Ascending aorta (tissue), 2 donors: ENCODE measurements at regions of chr12 and their contacts with region 1.

Region 1: GRCh38 chr12:109573029-109573913 is at the starts of genes MMAB and MVK:
- DNase-seq: peak; percentile 99 to 100
- H3K4me3 ChIP-seq: peak within 1 kb of the TSS; percentile 68 to 78
- H3K27ac ChIP-seq: peak within 1 kb of the TSS; percentile 64 to 78
- H3K4me1 ChIP-seq: peaks cover 0 to 12% of the 10 kb centered on the region in 2 donors
- H3K27me3 ChIP-seq: no peaks in the 10 kb centered on the region
- CTCF ChIP-seq: no peak
- total RNA-seq, gene MMAB: 43.5 TPM
- total RNA-seq, gene MVK: 53.1 TPM

Region 2: GRCh38 chr12:109713187-109713984 is 140.1 kb after region 1 on chr12 and contains the start of gene FAM222A:
- intact Hi-C with region 1: loop called (anchors 1 kb)
- DNase-seq: peak; percentile 85 to 98
- H3K4me3 ChIP-seq: peak within 1 kb of the TSS; percentile 65 to 94
- H3K27ac ChIP-seq: no peak within 1 kb of the TSS
- H3K4me1 ChIP-seq: peaks cover 0 to 6% of the 10 kb centered on the region in 2 donors
- H3K27me3 ChIP-seq: peaks cover 24% of the 10 kb centered on the region
- CTCF ChIP-seq: peak in 1 of 3 experiments; percentile 18
- total RNA-seq, gene FAM222A: 3.3 TPM

Region 3: GRCh38 chr12:110217996-110218674 is 644.9 kb after region 1 on chr12:
- intact Hi-C with region 1: loop called (anchors 10 kb)
- DNase-seq: no peak
- H3K4me3 ChIP-seq: no peak overlapping the region
- H3K27ac ChIP-seq: no peak overlapping the region
- H3K4me1 ChIP-seq: peaks cover 3 to 17% of the 10 kb centered on the region in 2 donors
- H3K27me3 ChIP-seq: no peaks in the 10 kb centered on the region
- CTCF ChIP-seq: no peak

Region 4: DNA sequence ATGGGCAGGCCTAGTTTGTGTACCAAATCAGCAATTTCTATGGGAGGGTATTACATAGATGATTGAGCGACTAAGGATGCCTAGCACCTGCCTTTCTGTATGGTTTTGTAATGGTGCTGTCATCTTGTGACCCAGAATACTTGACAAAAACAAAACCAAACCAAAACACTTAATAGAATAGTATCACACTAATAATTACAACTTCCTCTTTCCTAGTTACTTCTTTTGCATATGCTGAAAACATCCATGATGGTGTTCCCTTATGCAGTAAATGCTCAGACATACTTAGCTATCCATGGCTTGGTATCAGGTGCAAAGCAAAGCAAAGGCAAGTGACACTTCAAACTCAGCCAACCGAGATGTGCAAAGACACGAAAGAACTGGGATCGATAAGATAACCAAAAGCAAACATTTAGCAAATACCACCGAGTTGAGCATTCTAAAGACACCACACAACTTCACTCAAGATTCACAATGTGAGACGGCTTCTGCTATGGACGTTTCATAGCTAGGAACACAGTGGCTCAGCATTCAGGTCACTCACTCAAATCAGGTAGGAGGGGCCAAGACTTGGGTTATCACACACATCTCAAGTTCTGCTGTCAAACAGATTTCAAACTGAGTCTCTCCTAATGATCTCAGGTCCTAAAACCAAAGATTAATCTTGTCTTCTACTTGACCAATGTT is 1145.1 kb after region 1 on chr12:
- intact Hi-C with region 1: no loop called
- DNase-seq: no peak
- H3K4me3 ChIP-seq: no peak overlapping the region
- H3K27ac ChIP-seq: no peak overlapping the region
- H3K4me1 ChIP-seq: no peaks in the 10 kb centered on the region
- H3K27me3 ChIP-seq: no peaks in the 10 kb centered on the region
- CTCF ChIP-seq: no peak

Region 5: DNA sequence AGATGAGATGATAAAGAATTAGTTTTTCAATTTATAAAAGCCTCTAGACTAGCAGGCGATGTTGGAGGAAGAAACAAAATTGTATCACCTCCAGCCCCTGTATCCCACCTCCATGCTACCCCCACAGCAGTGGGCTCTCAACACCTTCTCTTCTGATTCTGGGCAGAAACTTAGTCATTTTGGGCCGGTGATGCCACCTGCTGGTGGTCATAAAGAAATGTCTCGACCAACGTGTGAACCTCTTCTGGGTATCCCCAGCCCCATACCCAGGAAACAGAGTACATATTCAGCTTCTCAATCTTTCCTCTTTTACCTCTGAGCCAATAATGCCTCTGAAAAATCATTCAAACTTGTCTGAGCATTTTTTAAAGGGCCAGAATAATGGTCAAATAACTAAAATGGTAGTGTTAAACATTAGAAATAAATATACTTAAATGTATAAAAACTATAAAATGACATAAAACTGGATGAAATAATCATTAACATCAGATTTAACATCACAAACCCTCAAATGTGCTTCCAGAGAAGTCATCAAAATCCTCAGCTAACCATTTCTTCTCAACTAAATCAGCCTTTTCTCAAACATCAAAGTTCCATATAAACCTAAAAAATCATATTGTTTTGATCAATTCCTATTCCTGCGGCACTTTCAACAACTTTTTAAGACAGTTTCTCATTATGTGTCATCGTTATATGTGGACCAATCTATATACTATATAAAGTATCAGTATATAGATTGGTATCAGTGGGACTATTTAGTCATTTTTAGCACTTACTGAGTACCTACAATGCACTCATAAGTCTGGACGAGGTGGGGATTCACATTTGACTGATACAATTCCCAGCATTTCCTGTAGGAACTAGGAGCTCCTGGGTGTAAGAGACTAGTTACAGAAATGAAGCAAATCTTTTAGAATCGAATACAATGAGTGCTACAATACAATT is 1956.4 kb after region 1 on chr12:
- intact Hi-C with region 1: loop called (anchors 10 kb)
- DNase-seq: no peak
- H3K4me3 ChIP-seq: no peak overlapping the region
- H3K27ac ChIP-seq: no peak overlapping the region
- H3K4me1 ChIP-seq: no peaks in the 10 kb centered on the region
- H3K27me3 ChIP-seq: no peaks in the 10 kb centered on the region
- CTCF ChIP-seq: peak; percentile 26 to 61 (median 53)